ENCODE measurements at regions of chr14 and their contacts with region 1.

Region 1: DNA sequence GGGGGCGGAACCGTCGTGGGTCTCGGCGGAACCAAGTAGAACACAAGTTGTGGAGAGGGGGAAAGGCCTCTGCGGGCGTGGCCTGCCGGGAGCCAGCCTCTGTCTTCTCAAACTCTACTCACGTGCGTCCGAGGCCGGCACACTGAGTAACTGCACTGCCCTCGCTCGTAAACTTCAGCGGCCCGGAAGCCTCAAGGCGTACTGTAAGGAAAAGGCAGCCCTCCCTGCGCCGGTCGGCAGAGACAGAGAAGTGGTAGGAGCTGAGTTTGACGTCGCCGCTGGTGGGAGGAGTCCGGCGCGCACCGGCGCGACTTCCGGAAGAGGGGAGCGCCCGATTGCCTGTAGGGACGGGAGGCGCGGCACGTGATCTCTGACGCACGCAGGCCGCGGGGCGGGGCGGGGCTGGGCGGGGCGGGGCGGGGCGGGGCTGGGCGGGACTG is at the start of gene FBXO33:
- DNase-seq: peak; percentile 98
- ATAC-seq: peak; percentile 87
- H3K4me3 Mint-ChIP-seq: peak within 1 kb of the TSS; percentile 92
- H3K27ac Mint-ChIP-seq: peak within 1 kb of the TSS; percentile 100
- H3K4me1 Mint-ChIP-seq: peaks cover 37% of the 10 kb centered on the region
- H3K27me3 Mint-ChIP-seq: no peaks in the 10 kb centered on the region
- total RNA-seq, gene FBXO33: 12.5 to 14.0 TPM

Region 2: DNA sequence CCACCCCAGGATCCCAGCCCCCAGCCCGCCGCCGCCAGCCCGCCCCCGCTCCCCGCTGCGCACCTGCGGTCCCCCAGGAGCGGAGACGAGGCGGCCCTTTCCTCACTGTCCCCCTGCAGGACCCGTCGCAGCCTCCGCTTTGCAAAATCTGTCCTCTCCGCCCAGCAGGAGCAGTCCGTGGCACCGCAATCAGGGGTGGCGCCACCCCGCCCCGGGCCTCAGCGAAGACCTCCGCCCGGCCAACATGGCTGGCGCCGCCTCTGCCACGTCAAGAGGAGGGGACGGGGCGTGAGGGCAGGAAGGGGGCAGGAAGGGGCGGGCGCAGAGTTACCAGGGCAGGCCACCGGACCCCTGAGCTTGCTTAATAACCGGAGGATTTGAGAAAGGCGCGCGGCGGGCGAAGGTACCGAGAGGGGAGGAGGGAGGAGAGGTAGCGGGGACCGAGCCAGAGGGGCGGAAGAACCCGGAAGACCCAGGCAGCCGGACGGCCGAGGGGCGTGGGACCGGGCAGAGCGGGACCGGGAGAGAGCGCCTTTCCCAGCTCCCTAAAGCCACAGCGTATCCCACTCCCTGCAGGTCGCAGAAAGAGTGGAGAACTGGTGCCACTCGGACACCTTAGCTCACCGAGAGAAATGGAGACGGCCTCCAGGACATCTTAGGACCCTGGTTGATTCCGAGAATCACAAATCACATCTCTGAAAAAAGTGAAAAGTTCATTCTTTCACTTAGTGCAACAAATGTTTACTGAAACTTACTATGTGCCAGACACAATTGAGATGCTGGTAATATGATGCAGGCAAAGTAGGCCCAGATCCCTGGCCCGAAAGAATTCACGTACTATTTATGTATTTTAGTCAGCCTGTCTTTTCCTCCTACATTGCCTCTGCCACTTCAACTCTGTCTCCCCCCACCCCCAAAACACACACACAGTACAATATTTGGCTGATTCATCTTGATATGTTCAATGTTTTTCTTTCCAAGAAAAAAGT is 328.9 kb before region 1 on chr14 and contains the start of gene SEC23A:
- CTCF ChIA-PET with region 1: interaction called, 7 read pairs
- POLR2A ChIA-PET with region 1: interaction called, 8 read pairs
- intact Hi-C with region 1: loop called (anchors 1 to 5 kb)
- DNase-seq: peak; percentile 90
- ATAC-seq: peak; percentile 92
- H3K4me3 Mint-ChIP-seq: peak within 1 kb of the TSS; percentile 93
- H3K27ac Mint-ChIP-seq: peak within 1 kb of the TSS; percentile 94
- H3K4me1 Mint-ChIP-seq: peaks cover 37% of the 10 kb centered on the region
- H3K27me3 Mint-ChIP-seq: no peaks in the 10 kb centered on the region
- total RNA-seq, gene SEC23A: 49.6 to 72.8 TPM

Region 3: DNA sequence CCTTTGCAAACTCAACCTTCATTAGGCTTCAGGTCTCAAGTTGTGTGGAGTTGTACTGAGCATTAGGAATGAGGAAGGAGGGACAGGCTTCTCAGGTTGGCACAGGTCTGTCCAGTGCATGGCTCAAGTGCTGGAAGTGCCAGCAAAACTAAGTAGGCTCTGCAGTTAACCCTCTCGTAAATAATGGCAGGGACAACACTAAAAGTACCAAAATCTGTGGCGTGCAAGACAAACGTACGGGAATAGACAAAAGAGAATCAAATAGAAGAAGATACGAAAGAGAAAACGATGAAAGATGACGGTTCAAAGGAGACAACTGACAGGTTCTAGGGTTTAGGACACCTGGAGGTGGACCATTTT is 262.7 kb before region 1 on chr14:
- CTCF ChIA-PET with region 1: interaction called, 3 read pairs
- POLR2A ChIA-PET with region 1: interaction called, 18 read pairs
- intact Hi-C with region 1: loop called (anchors 1 to 2 kb)
- DNase-seq: no peak
- ATAC-seq: no peak
- H3K4me3 Mint-ChIP-seq: peak overlapping the region; percentile 87
- H3K27ac Mint-ChIP-seq: peak overlapping the region; percentile 89
- H3K4me1 Mint-ChIP-seq: peaks cover 48% of the 10 kb centered on the region
- H3K27me3 Mint-ChIP-seq: no peaks in the 10 kb centered on the region

Region 4: GRCh38 chr14:39229222-39229543 is 203.0 kb before region 1 on chr14:
- CTCF ChIA-PET with region 1: interaction called, 6 read pairs
- POLR2A ChIA-PET with region 1: no interaction called
- intact Hi-C with region 1: loop called (anchors 1 kb)
- DNase-seq: peak; percentile 76
- ATAC-seq: peak; percentile 97
- H3K4me3 Mint-ChIP-seq: no peak overlapping the region
- H3K27ac Mint-ChIP-seq: peak overlapping the region; percentile 94
- H3K4me1 Mint-ChIP-seq: peaks cover 47% of the 10 kb centered on the region
- H3K27me3 Mint-ChIP-seq: no peaks in the 10 kb centered on the region

Region 5: DNA sequence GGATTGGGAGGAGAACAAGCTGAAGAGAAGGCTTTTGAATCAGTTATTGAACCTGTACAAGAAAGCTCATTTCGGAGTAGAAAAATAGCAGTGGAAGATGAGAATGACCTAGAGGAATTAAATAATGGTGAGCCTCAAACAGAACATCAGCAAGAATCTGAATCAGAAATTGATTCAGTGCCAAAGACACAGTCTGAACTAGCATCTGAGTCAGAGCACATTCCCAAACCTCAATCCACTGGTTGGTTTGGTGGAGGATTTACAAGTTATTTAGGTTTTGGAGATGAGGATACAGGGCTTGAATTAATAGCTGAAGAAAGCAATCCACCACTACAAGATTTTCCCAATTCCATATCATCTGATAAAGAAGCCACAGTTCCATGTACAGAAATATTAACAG is 184.9 kb before region 1 on chr14:
- CTCF ChIA-PET with region 1: no interaction called
- POLR2A ChIA-PET with region 1: no interaction called
- intact Hi-C with region 1: no loop called
- DNase-seq: no peak
- ATAC-seq: no peak
- H3K4me3 Mint-ChIP-seq: no peak overlapping the region
- H3K27ac Mint-ChIP-seq: no peak overlapping the region
- H3K4me1 Mint-ChIP-seq: no peaks in the 10 kb centered on the region
- H3K27me3 Mint-ChIP-seq: peaks cover 2% of the 10 kb centered on the region

Region 6: DNA sequence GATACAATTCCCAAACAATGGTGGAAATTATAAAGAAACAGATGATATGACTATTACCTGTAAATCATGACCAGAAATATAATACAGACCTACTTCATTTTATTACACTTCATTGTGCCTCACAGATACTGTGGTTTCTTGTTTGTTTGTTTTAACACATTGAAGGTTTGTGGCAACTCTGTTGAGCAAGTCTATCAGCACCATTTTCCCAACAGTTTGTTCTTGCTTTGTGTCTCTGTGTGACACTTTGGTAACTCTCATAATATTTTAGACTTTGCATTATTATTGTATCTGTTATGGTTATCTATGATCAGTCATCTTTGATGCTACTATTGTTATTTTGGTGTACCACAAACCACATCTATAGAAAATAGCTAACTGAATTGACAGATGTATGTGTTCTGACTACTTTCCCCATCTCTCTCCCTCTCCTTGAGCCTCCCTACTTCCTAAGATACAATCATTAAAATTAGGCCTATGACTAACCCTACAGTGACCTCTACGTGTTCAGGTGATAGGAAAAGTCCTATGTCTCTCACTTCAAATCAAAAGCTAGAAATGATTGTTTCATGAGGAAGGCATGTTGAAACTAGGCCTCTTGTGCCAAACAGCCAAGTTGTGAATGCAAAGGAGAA is 49.1 kb before region 1 on chr14:
- CTCF ChIA-PET with region 1: no interaction called
- POLR2A ChIA-PET with region 1: interaction called, 3 read pairs
- intact Hi-C with region 1: loop called in 1 of 2 experiments (anchors 5 kb)
- DNase-seq: no peak
- ATAC-seq: peak; percentile 97
- H3K4me3 Mint-ChIP-seq: no peak overlapping the region
- H3K27ac Mint-ChIP-seq: no peak overlapping the region
- H3K4me1 Mint-ChIP-seq: peaks cover 31% of the 10 kb centered on the region
- H3K27me3 Mint-ChIP-seq: no peaks in the 10 kb centered on the region

Region 7: DNA sequence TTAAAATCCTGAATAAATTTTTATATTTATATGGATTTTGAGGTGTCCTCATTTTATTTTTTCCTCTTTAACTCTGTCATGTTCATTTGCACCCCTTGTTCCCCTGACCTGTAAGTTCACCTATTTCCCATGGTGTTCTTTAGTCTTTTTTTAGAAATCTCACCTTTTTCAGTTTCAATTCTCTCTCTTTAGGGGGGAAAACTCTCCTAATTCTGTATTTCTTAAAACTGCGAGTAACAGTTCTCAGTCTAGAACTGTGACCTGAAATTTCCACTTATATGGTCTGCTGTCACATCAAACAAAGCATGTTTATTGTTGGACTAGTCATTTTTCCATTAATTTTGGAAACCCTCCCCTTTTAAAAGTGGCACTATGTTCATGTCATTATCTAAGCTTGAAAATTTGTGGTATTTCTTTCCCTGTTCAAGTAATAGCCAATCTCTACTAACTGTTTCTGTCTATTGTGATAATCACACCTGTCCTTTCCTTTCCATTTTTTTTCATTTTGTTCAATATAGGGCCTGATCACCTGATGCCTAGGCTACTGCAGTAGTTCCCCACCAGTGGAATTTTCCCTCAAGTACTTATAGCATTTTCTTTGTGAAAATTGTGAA is 14.0 kb after region 1 on chr14:
- CTCF ChIA-PET with region 1: interaction called, 14 read pairs
- POLR2A ChIA-PET with region 1: interaction called, 3 read pairs
- intact Hi-C with region 1: loop called in 1 of 2 experiments (anchors 2 kb)
- DNase-seq: no peak
- ATAC-seq: peak; percentile 34
- H3K4me3 Mint-ChIP-seq: no peak overlapping the region
- H3K27ac Mint-ChIP-seq: peak overlapping the region; percentile 52
- H3K4me1 Mint-ChIP-seq: peaks cover 39% of the 10 kb centered on the region
- H3K27me3 Mint-ChIP-seq: no peaks in the 10 kb centered on the region